Psoas muscle (tissue), 8 donors: ENCODE measurements at regions of chr21 and their contacts with region 1.

Region 1: DNA sequence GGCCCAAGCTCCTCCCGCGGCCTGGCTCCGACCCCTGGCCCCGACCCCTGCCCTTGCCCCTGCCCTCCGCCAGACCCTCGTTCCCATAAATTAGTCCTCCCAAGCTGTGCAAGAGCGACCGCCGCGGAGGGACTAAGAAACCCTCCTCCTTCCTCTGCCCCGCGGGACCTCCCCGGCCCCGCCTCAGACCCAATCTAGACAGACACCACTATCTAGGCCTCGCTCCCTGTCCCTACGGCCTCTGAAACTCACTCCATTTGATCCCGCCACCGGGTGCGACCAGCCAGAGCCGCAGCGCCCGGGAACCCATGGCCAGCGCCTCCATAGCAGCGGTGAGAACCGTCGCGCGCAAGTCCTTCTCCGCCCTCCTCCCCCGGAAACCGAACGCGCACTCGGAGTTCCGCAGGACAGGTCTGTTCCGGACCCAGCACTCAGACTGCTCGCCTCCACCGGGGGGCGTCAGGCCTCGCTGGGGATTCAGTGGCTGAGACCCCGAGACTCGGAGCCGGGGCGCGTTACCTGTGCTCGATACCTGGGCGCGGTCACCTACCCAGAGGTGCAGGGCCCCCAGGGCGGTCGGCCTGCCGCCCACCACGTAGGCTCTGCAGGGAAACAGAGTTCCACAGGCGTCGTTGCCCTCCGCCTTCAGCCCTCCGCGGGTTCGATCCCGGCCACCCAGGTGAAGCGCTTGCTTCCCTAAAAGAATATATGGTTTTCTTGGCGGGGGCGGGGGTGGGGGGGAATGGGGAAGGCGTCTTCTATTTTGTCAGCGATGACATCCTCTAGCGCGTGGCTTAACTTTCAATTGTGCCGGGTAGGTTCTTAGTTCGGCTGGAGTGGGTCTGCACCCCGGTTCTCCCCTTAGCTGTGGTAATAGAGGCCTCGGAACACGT is at the start of gene MRPL39:
- DNase-seq: peak; percentile 85 to 91
- ATAC-seq: peak; percentile 97 to 98 (median 98)
- H3K4me3 ChIP-seq: peak within 1 kb of the TSS; percentile 75
- H3K27ac ChIP-seq: peak within 1 kb of the TSS; percentile 87
- H3K4me1 ChIP-seq: peaks cover 22% of the 10 kb centered on the region
- H3K27me3 ChIP-seq: no peaks in the 10 kb centered on the region
- CTCF ChIP-seq: peak; percentile 54
- total RNA-seq, gene MRPL39: 40.5 to 44.5 (median 42.0) TPM

Region 2: DNA sequence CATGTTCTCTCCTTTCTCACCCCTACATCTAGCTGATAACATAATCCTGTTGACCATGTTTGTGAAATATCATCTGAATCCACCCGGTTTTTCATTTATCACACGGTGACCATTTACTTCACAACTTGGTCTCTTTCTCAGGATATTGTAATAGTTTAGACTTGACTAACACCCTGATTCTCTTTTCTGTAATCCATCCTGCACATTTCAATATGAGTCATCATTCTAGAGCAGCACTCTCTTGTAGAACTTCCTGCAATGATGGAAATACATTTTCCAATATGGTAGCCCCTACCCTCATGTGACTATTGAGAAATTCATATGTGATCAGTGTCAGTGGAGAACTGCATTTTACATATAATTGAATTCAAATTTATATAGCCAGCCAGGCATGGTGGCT is 29.3 kb after region 1 on chr21:
- intact Hi-C with region 1: loop called in 1 of 2 experiments (anchors 1 kb)
- DNase-seq: no peak
- ATAC-seq: no peak
- H3K4me3 ChIP-seq: no peak overlapping the region
- H3K27ac ChIP-seq: no peak overlapping the region
- H3K4me1 ChIP-seq: peaks cover 14% of the 10 kb centered on the region
- H3K27me3 ChIP-seq: peaks cover 0 to 20% (median 0%) of the 10 kb centered on the region in 3 donors
- CTCF ChIP-seq: no peak

Region 3: DNA sequence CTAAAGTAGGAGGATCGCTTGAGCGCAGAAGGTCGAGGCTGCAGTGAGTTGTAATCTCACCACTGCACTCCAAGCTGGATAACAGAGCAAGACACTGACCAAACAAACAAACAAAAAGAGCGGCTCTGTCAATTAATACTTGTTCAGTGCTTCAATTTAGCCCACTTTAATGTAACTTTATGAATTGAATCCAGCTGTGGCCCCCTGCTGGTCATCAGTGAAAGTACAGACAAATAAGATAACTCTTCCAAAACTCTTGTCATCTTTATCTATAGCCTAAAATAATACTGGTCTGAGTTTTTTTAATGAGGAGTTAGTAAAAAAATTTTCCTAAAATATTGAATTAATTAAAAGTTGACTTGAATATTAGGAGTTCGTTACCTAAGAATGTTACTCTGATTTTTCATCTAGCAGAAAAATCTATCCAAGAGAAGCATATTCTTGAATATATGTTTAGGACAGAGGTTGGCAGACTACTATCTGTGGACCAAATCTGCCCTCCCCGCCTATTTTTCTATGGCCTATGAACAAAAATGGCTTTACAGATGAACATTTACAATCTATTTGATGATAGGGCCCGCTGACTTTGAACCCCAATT is 101.2 kb after region 1 on chr21:
- intact Hi-C with region 1: loop called (anchors 2 kb)
- DNase-seq: no peak
- ATAC-seq: peak in 2 of 4 donors; percentile 40 to 70
- H3K4me3 ChIP-seq: no peak overlapping the region
- H3K27ac ChIP-seq: no peak overlapping the region
- H3K4me1 ChIP-seq: no peaks in the 10 kb centered on the region
- H3K27me3 ChIP-seq: no peaks in the 10 kb centered on the region
- CTCF ChIP-seq: peak; percentile 83

Region 4: GRCh38 chr21:25734904-25735645 is 127.7 kb after region 1 on chr21 and contains the starts of genes ATP5PF and GABPA:
- intact Hi-C with region 1: loop called in 1 of 2 experiments (anchors 5 kb)
- DNase-seq: peak; percentile 97 to 99
- ATAC-seq: peak; percentile 89 to 94 (median 94)
- H3K4me3 ChIP-seq: peak within 1 kb of the TSS; percentile 93
- H3K27ac ChIP-seq: peak within 1 kb of the TSS; percentile 97
- H3K4me1 ChIP-seq: peaks cover 48% of the 10 kb centered on the region
- H3K27me3 ChIP-seq: no peaks in the 10 kb centered on the region
- CTCF ChIP-seq: no peak
- total RNA-seq, gene ATP5PF: 355 to 424 (median 366) TPM
- total RNA-seq, gene GABPA: 12.1 to 22.3 (median 16.4) TPM

Region 5: GRCh38 chr21:26715878-26716506 is 1108.6 kb after region 1 on chr21:
- intact Hi-C with region 1: loop called in 1 of 2 experiments (anchors 5 kb)
- DNase-seq: no peak
- ATAC-seq: peak; percentile 41 to 82 (median 49)
- H3K4me3 ChIP-seq: no peak overlapping the region
- H3K27ac ChIP-seq: no peak overlapping the region
- H3K4me1 ChIP-seq: peaks cover 8% of the 10 kb centered on the region
- H3K27me3 ChIP-seq: peaks cover 0 to 2% (median 0%) of the 10 kb centered on the region in 3 donors
- CTCF ChIP-seq: peak; percentile 84